Activated CD4-positive, alpha-beta T cell treated with anti-CD3 and anti-CD28 coated beads, Interleukin-2, amount 10 ng/mL, durations not matched to agents 7 days and 5 days (primary cell): ENCODE measurements at regions of chr11 and their contacts with region 1.

Region 1: GRCh38 chr11:114180301-114181055 is 115.7 kb upstream of the NNMT start:
- DNase-seq: no peak
- H3K4me3 Mint-ChIP-seq: no peak overlapping the region
- H3K27ac Mint-ChIP-seq: peak overlapping the region; percentile 74
- H3K4me1 Mint-ChIP-seq: peaks cover 81% of the 10 kb centered on the region
- H3K27me3 Mint-ChIP-seq: no peaks in the 10 kb centered on the region

Region 2: GRCh38 chr11:114148013-114148382 is 32.5 kb before region 1 on chr11:
- CTCF ChIA-PET with region 1: no interaction called
- POLR2A ChIA-PET with region 1: no interaction called
- DNase-seq: no peak
- H3K4me3 Mint-ChIP-seq: no peak overlapping the region
- H3K27ac Mint-ChIP-seq: no peak overlapping the region
- H3K4me1 Mint-ChIP-seq: peaks cover 8% of the 10 kb centered on the region
- H3K27me3 Mint-ChIP-seq: peaks cover 12% of the 10 kb centered on the region

Region 3: DNA sequence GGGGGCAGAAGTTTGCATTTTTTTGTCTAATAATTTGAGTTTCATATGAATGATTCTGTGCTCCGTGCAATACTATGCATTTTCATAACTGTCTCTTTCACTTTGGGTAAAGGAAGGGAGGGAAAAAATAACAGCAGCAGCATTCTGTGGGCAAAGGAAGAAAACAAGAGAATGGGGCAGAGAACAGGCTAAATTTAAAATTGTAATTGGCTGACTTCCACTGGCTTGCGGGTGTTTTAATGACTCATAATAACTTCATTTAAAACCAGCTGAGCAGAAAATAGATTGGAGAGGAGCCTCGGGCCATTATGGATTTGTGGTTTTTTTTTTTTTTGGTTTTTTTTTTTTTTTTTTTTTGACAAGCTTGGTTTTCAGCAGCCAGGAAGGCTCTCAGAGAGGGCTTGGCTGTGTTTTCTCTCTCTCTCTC is 13.6 kb before region 1 on chr11:
- CTCF ChIA-PET with region 1: interaction called, 15 read pairs
- POLR2A ChIA-PET with region 1: interaction called, 3 read pairs
- DNase-seq: peak; percentile 40
- H3K4me3 Mint-ChIP-seq: peak overlapping the region; percentile 24
- H3K27ac Mint-ChIP-seq: peak overlapping the region; percentile 78
- H3K4me1 Mint-ChIP-seq: peaks cover 88% of the 10 kb centered on the region
- H3K27me3 Mint-ChIP-seq: no peaks in the 10 kb centered on the region

Region 4: GRCh38 chr11:114192841-114193389 is 12.4 kb after region 1 on chr11:
- CTCF ChIA-PET with region 1: interaction called, 12 read pairs
- POLR2A ChIA-PET with region 1: no interaction called
- DNase-seq: no peak
- H3K4me3 Mint-ChIP-seq: no peak overlapping the region
- H3K27ac Mint-ChIP-seq: peak overlapping the region; percentile 50
- H3K4me1 Mint-ChIP-seq: peaks cover 43% of the 10 kb centered on the region
- H3K27me3 Mint-ChIP-seq: no peaks in the 10 kb centered on the region